Mammary epithelial cell (primary cell): ENCODE measurements at regions of chr12 and their contacts with region 1.

Region 1: DNA sequence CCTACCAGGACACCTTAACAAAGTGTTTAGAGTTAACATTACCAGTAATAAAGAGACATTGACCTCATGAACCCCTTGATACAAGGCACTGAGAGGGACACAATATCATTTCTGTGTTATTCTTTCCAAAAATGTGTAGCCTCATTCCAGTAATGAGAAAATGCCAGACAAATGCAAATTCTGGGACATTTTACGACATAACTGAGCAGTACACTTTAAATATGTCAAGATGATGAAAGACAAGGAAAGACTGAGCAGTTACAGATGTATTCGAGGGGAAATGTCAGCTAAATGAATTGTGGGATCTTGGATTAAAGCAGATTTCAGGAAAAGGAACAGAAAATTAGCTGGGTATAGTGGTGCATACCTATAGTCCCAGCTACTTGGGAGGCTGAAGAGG is 255.6 kb downstream of the ERC1 start:
- DNase-seq: no peak
- H3K4me3 ChIP-seq: no peak overlapping the region
- H3K27ac ChIP-seq: no peak overlapping the region
- H3K4me1 ChIP-seq: peaks cover 8% of the 10 kb centered on the region
- H3K27me3 ChIP-seq: no peaks in the 10 kb centered on the region
- CTCF ChIP-seq: no peak

Region 2: GRCh38 chr12:1185460-1186182 is 61.0 kb before region 1 on chr12:
- CTCF ChIA-PET with region 1: no interaction called
- dilution Hi-C with region 1: no loop called
- in situ Hi-C with region 1: no loop called
- intact Hi-C with region 1: no loop called
- DNase-seq: no peak
- H3K4me3 ChIP-seq: no peak overlapping the region
- H3K27ac ChIP-seq: no peak overlapping the region
- H3K4me1 ChIP-seq: peaks cover 9% of the 10 kb centered on the region
- H3K27me3 ChIP-seq: no peaks in the 10 kb centered on the region
- CTCF ChIP-seq: no peak

Region 3: DNA sequence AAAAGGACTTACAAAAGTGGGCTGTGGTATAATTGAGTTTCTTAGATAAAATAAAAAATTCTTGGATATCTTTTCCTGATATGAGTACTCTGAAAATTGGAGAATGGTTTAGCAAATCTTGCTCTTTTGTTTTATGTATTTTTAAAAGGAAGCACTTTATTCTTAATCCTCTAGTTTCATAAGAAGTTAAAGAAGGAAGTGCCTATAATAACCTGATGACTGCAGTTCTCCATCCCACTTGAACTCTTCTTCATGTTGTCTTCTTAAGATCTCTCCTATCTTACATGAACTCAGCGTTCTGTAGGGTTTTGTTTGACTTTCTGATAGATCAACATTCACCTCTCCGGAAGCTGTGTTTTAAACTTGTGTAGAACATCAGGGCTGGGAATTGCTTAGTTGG is 15.4 kb after region 1 on chr12:
- CTCF ChIA-PET with region 1: no interaction called
- dilution Hi-C with region 1: no loop called
- in situ Hi-C with region 1: no loop called
- intact Hi-C with region 1: no loop called
- DNase-seq: no peak
- H3K4me3 ChIP-seq: no peak overlapping the region
- H3K27ac ChIP-seq: no peak overlapping the region
- H3K4me1 ChIP-seq: no peaks in the 10 kb centered on the region
- H3K27me3 ChIP-seq: no peaks in the 10 kb centered on the region
- CTCF ChIP-seq: no peak

Region 4: GRCh38 chr12:1277905-1278304 is 31.3 kb after region 1 on chr12:
- CTCF ChIA-PET with region 1: no interaction called
- dilution Hi-C with region 1: no loop called
- in situ Hi-C with region 1: no loop called
- intact Hi-C with region 1: no loop called
- DNase-seq: no peak
- H3K4me3 ChIP-seq: no peak overlapping the region
- H3K27ac ChIP-seq: no peak overlapping the region
- H3K4me1 ChIP-seq: no peaks in the 10 kb centered on the region
- H3K27me3 ChIP-seq: no peaks in the 10 kb centered on the region
- CTCF ChIP-seq: no peak

Region 5: GRCh38 chr12:1289371-1290155 is 42.9 kb after region 1 on chr12:
- CTCF ChIA-PET with region 1: no interaction called
- dilution Hi-C with region 1: loop called (anchors 5 kb)
- in situ Hi-C with region 1: no loop called
- intact Hi-C with region 1: no loop called
- DNase-seq: no peak
- H3K4me3 ChIP-seq: no peak overlapping the region
- H3K27ac ChIP-seq: no peak overlapping the region
- H3K4me1 ChIP-seq: no peaks in the 10 kb centered on the region
- H3K27me3 ChIP-seq: no peaks in the 10 kb centered on the region
- CTCF ChIP-seq: no peak